MCF 10A (cell line): ENCODE measurements at regions of chr21 and their contacts with region 1.

Region 1: DNA sequence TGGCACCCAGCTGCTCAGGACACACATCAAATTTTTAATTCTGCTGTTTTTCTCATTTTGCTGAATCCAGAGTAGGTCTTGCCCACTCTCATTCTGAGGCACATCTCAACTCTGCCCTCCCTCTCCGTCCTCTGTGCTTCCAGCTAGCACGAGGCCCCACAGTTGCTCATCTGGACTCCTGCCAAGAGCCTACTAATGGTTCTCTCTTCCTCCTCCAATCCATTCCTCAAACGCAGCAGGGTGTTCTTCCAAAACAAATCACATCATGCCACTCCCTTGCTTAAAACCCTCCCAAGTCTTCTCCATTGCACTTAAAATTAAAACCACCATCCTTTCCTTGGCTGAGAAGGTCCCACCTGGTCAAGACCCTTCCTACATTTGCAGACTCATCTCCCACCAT is 49.8 kb upstream of the SCAF4 start:
- DNase-seq: peak; percentile 74
- H3K4me3 Mint-ChIP-seq: no peak overlapping the region
- H3K27ac Mint-ChIP-seq: no peak overlapping the region
- H3K4me1 Mint-ChIP-seq: peaks cover 16% of the 10 kb centered on the region
- H3K27me3 Mint-ChIP-seq: no peaks in the 10 kb centered on the region
- CTCF ChIP-seq: no peak

Region 2: GRCh38 chr21:31872452-31873274 is 90.9 kb after region 1 on chr21 and contains the start of gene HUNK:
- CTCF ChIA-PET with region 1: interaction called, 11 read pairs
- POLR2A ChIA-PET with region 1: no interaction called
- intact Hi-C with region 1: no loop called
- DNase-seq: no peak
- H3K4me3 Mint-ChIP-seq: no peak within 1 kb of the TSS
- H3K27ac Mint-ChIP-seq: no peak within 1 kb of the TSS
- H3K4me1 Mint-ChIP-seq: no peaks in the 10 kb centered on the region
- H3K27me3 Mint-ChIP-seq: peaks cover 67% of the 10 kb centered on the region
- CTCF ChIP-seq: no peak
- total RNA-seq, gene HUNK: not detected in 2 replicates

Region 3: DNA sequence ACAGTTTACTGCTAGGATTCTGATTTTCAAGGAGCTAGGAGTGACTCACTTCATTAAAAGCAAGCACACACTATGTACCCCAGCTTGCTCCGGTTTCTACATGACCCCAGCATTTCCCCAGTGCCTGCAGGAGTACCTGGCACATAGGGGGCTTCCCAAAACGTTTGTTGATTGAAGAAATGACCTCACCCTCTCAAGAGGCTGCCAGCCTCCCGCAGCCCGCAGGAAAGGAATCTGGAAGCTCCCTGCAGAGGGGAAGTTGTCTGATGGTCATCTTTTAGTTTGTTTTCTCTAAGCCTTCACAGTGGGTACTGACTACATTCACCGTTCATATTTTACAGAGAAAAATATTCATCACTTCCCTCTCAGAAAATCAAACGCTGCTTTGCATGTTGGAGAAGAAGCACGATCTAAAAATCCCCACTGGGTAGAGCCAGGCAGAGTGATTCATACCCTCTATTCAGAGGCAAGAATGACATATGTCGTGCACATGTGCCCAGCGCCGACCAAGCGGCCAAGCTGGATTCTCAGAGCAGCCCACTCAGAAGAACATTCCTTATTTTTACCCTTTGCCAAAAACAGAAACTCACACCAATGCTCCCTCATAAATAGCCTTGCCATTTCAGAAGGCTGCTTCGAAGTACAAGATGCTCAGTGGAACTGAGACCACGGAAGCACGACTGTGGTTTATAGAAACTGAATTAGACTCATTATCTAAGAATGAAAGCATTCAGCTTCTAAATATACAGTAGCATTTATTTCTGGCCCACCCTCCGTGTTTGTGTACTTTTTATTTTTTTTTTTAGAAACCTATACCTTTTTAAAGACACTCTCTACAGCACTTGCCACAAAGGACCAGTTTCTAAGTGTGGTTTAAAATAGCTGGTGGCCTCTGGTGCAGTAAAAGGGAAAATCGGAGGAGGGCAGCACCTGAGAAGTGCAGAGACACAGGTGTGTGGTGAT is 353.9 kb after region 1 on chr21:
- CTCF ChIA-PET with region 1: interaction called, 5 read pairs
- POLR2A ChIA-PET with region 1: no interaction called
- intact Hi-C with region 1: loop called (anchors 5 kb)
- DNase-seq: peak; percentile 69
- H3K4me3 Mint-ChIP-seq: peak overlapping the region; percentile 59
- H3K27ac Mint-ChIP-seq: no peak overlapping the region
- H3K4me1 Mint-ChIP-seq: peaks cover 52% of the 10 kb centered on the region
- H3K27me3 Mint-ChIP-seq: no peaks in the 10 kb centered on the region
- CTCF ChIP-seq: no peak

Region 4: DNA sequence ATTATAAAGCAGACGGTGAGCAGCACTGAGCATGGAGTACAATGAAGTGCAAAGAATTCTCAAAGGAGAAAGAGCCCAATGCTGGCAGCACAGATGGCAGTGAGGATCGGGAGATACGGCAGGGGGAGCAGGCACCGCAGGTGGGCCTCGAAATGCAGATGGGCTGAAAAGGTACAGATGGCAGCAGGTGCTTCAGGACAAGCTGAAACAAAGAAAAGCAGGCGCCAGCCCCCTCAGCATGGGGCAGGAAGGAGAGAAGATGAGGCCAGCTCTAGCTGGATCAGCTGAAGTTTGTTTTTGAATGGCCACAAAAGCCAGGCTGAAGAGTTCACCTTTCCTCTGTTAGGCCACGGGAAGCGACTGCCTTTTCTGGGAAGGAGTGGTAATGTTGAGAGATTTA is 822.7 kb after region 1 on chr21:
- CTCF ChIA-PET with region 1: interaction called, 7 read pairs
- POLR2A ChIA-PET with region 1: no interaction called
- intact Hi-C with region 1: loop called (anchors 10 kb)
- DNase-seq: no peak
- H3K4me3 Mint-ChIP-seq: no peak overlapping the region
- H3K27ac Mint-ChIP-seq: no peak overlapping the region
- H3K4me1 Mint-ChIP-seq: no peaks in the 10 kb centered on the region
- H3K27me3 Mint-ChIP-seq: no peaks in the 10 kb centered on the region
- CTCF ChIP-seq: no peak